Thyroid gland (tissue), 4 donors: ENCODE measurements at regions of chr6 and their contacts with region 1.

Region 1: GRCh38 chr6:7389451-7390225 is at the starts of genes CAGE1 and RIOK1:
- DNase-seq: peak; percentile 97
- H3K4me3 ChIP-seq: peak within 1 kb of the TSS; percentile 43 to 86 (median 78)
- H3K27ac ChIP-seq: peak within 1 kb of the TSS; percentile 58 to 88 (median 85)
- H3K4me1 ChIP-seq: peaks cover 11 to 22% of the 10 kb centered on the region in 2 donors
- H3K27me3 ChIP-seq: no peaks in the 10 kb centered on the region
- CTCF ChIP-seq: peak in 2 of 6 experiments; percentile 4 to 15
- POLR2A ChIP-seq: peak in 1 of 2 donors; percentile 90
- total RNA-seq, gene CAGE1: 0.20 TPM in 1 of 4 donors, not detected in the others
- total RNA-seq, gene RIOK1: 11.3 to 17.5 (median 15.8) TPM

Region 2: GRCh38 chr6:7312616-7313504 is 76.8 kb before region 1 on chr6 and contains the start of gene SSR1:
- intact Hi-C with region 1: loop called (anchors 2 kb)
- DNase-seq: peak; percentile 98
- H3K4me3 ChIP-seq: peak within 1 kb of the TSS; percentile 43 to 95 (median 62)
- H3K27ac ChIP-seq: peak within 1 kb of the TSS; percentile 82 to 98 (median 91)
- H3K4me1 ChIP-seq: peaks cover 7 to 13% of the 10 kb centered on the region in 2 donors
- H3K27me3 ChIP-seq: no peaks in the 10 kb centered on the region
- CTCF ChIP-seq: no peak
- POLR2A ChIP-seq: peak in 1 of 2 donors; percentile 93
- total RNA-seq, gene SSR1: 55.9 to 113 (median 74.8) TPM